RWPE1 (cell line): ENCODE measurements at regions of chr1 and their contacts with region 1.

Region 1: DNA sequence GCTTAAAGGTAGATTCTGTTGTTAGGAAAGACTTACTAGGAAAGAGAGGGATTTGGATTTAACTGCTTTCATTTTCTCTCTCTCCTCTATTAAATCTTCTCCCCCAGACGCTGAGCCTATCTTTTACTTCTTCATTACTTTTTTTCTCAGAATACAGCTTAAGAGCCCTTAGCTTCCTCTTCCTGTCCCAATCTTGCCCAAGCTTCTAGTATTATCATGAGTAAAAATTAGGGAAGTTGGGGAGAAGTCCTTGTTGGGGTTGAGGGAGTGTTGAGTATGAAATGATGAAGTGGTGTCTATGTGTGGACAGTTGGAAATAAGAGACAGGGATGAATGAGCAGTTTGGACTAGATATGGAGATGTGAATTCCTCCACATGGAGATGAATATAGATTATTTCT is 35.0 kb downstream of the ACP6 start:
- DNase-seq: no peak
- H3K27ac ChIP-seq: no peak overlapping the region
- CTCF ChIP-seq: no peak

Region 2: GRCh38 chr1:147599362-147600118 is 35.8 kb before region 1 on chr1:
- CTCF ChIA-PET with region 1: no interaction called
- POLR2A ChIA-PET with region 1: interaction called, 10 read pairs
- DNase-seq: peak; percentile 94
- H3K27ac ChIP-seq: peak overlapping the region; percentile 77
- CTCF ChIP-seq: no peak

Region 3: GRCh38 chr1:147647796-147648633 is 12.7 kb after region 1 on chr1:
- CTCF ChIA-PET with region 1: no interaction called
- POLR2A ChIA-PET with region 1: no interaction called
- DNase-seq: no peak
- H3K27ac ChIP-seq: no peak overlapping the region
- CTCF ChIP-seq: no peak